ENCODE measurements at regions of chr2 and their contacts with region 1.

Region 1: GRCh38 chr2:198296665-198297308 is 492.4 kb downstream of the PLCL1 start:
- DNase-seq: peak; percentile 57
- H3K4me3 Mint-ChIP-seq: no peak overlapping the region
- H3K27ac Mint-ChIP-seq: no peak overlapping the region
- H3K4me1 Mint-ChIP-seq: no peaks in the 10 kb centered on the region
- H3K27me3 Mint-ChIP-seq: peaks cover 2% of the 10 kb centered on the region

Region 2: DNA sequence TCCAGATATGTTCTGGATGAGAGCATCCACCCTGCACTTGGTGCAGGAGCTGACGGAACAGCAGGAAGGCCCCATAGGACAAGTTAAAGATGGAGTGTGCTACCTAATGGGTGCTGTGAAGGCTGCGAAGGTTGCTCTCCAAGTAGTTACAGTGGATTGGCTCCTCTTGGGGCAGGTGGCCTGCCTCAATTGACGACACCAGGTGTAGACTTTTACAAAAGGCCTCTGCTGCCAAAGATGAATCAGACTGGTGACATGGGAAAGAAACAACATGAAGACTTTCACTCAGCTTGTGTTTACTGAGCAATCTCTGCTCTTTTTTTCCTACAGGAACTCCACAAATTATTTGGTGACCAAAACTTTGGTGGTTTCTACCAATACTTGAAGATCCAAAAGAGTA is 54.7 kb before region 1 on chr2:
- CTCF ChIA-PET with region 1: no interaction called
- POLR2A ChIA-PET with region 1: no interaction called
- DNase-seq: no peak
- H3K4me3 Mint-ChIP-seq: no peak overlapping the region
- H3K27ac Mint-ChIP-seq: no peak overlapping the region
- H3K4me1 Mint-ChIP-seq: no peaks in the 10 kb centered on the region
- H3K27me3 Mint-ChIP-seq: peaks cover 3% of the 10 kb centered on the region

Region 3: DNA sequence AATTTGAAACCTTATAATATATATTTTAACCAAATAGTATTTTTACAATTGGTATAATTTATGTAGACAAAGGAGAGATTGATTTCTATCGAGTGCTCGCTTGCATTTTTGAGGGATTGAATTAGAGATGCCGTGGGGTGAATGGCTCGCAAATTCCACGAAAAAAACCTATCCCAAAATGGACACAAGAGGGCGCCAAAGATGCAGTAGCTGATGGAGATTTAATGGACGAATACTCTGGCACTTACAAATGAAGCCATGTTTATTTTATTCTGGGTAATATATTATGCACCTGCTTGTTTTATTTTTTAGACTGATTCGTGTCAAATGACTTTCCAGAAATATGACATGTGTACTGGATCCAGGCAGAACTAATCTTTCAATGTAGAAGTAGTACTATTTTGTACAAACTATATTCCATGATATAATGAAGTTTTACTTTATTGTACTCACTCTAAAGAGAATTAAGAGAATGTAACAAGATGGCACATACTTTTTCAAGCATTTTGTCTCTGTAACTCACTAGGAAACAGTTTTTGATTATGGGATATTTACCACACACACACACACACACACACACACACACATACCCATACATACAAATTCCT is 13.0 kb after region 1 on chr2:
- CTCF ChIA-PET with region 1: interaction called, 10 read pairs
- POLR2A ChIA-PET with region 1: no interaction called
- DNase-seq: peak; percentile 58
- H3K4me3 Mint-ChIP-seq: no peak overlapping the region
- H3K27ac Mint-ChIP-seq: no peak overlapping the region
- H3K4me1 Mint-ChIP-seq: no peaks in the 10 kb centered on the region
- H3K27me3 Mint-ChIP-seq: peaks cover 31% of the 10 kb centered on the region

Measured in activated CD4-positive, alpha-beta memory T cell treated with anti-CD3 and anti-CD28 coated beads, Interleukin-2, amount 10 ng/mL, durations not matched to agents 7 days and 5 days (primary cell).